ENCODE measurements at regions of chr17 and their contacts with region 1.

Region 1: GRCh38 chr17:7045909-7046724 is 2.2 kb upstream of the SLC16A11 start:
- DNase-seq: peak; percentile 35
- H3K4me3 ChIP-seq: no peak overlapping the region
- H3K27me3 ChIP-seq: peaks cover 16% of the 10 kb centered on the region
- CTCF ChIP-seq: peak; percentile 68

Region 2: DNA sequence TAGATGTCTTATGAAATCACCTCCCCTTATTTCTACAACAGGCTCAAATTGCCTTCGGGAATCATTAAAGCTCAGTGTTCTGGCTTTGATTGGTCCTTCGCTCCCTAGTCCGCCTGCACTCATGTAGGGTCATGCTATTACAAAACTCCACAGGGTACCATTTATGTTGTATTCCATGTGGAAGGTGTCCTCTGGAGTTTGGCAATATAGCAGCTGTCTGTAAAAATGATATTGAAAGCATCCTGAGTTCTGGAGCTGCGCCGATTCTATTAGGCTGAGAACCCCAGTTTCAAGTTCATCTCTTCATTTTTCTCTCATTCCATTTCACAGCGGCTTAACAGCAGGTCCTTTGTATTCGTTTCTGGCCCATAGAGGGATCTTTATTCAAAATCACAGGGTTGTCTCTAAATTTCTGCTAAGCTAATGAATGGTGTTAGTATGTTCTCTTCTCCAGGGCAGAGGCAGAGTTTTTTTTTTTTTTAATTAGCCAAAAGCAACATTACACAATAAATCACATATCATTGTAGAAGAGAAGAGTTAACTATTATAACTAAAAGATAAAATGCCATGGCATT is 142.7 kb before region 1 on chr17:
- CTCF ChIA-PET with region 1: no interaction called
- POLR2A ChIA-PET with region 1: no interaction called
- DNase-seq: no peak
- H3K4me3 ChIP-seq: no peak overlapping the region
- H3K27me3 ChIP-seq: no peaks in the 10 kb centered on the region; the same call in 1 of the 2 replicates
- CTCF ChIP-seq: no peak

Region 3: GRCh38 chr17:7136266-7136877 is 90.3 kb after region 1 on chr17:
- CTCF ChIA-PET with region 1: interaction called, 92 read pairs
- POLR2A ChIA-PET with region 1: no interaction called
- DNase-seq: peak; percentile 1
- H3K4me3 ChIP-seq: no peak overlapping the region
- H3K27me3 ChIP-seq: peaks cover 12% of the 10 kb centered on the region
- CTCF ChIP-seq: peak; percentile 91

Region 4: DNA sequence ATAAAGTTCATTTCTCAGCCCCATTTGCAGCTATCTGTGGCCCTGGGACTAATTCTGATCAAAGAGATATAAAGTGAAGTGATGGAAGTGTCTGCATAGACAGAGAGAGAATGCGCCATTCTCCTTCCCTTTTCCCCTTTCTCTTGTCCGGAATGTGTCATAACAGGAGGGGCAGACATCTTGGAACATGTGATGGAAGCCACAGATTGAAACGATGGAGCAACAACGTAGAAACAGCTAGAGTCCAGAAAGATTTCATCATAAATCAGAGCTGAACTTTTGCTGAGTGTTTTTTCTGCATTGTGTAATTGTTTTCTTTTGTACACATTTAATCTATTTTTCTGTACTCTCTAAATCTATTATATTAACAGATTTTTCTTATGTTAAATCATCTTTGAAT is 121.7 kb after region 1 on chr17:
- CTCF ChIA-PET with region 1: interaction called, 11 read pairs
- POLR2A ChIA-PET with region 1: no interaction called
- DNase-seq: no peak
- H3K4me3 ChIP-seq: no peak overlapping the region
- H3K27me3 ChIP-seq: no peaks in the 10 kb centered on the region
- CTCF ChIP-seq: no peak

Region 5: DNA sequence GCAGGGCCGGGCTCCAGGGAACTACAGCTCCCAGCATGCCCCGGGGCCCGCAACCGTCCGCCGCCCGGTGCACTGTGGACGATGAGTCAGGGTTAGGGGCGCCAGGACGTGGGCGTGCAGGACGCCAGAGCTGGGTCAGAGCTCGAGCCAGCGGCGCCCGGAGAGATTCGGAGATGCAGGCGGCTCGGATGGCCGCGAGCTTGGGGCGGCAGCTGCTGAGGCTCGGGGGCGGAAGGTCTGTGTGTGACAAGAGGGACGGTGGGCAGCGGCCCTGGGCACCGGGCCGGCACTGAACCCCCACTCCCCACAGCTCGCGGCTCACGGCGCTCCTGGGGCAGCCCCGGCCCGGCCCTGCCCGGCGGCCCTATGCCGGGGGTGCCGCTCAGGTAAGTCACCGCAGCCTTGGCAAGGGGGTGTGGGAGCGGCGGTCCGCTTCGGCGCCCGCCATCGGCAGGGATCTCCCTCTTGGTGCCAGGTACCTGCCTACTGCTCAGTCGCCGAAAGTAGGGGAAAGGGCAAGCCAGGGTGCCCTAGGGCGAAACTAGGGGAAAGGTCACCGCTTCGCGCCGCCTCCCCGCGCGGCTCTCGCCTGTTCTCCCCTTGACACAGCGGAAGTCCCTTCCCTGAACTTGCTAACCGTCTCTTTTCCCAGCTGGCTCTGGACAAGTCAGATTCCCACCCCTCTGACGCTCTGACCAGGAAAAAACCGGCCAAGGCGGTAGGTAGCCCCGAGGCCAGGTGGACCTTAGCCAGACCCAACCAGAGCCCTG is 173.9 kb after region 1 on chr17 and contains the starts of genes ACADVL and DLG4:
- CTCF ChIA-PET with region 1: interaction called, 13 read pairs
- POLR2A ChIA-PET with region 1: no interaction called
- DNase-seq: peak; percentile 37
- H3K4me3 ChIP-seq: peak within 1 kb of the TSS; percentile 84
- H3K27me3 ChIP-seq: no peaks in the 10 kb centered on the region
- CTCF ChIP-seq: no peak
- polyA plus RNA-seq, gene ACADVL: 335 and 517 TPM in 2 replicates
- polyA plus RNA-seq, gene DLG4: 13.3 and 20.4 TPM in 2 replicates

Region 6: DNA sequence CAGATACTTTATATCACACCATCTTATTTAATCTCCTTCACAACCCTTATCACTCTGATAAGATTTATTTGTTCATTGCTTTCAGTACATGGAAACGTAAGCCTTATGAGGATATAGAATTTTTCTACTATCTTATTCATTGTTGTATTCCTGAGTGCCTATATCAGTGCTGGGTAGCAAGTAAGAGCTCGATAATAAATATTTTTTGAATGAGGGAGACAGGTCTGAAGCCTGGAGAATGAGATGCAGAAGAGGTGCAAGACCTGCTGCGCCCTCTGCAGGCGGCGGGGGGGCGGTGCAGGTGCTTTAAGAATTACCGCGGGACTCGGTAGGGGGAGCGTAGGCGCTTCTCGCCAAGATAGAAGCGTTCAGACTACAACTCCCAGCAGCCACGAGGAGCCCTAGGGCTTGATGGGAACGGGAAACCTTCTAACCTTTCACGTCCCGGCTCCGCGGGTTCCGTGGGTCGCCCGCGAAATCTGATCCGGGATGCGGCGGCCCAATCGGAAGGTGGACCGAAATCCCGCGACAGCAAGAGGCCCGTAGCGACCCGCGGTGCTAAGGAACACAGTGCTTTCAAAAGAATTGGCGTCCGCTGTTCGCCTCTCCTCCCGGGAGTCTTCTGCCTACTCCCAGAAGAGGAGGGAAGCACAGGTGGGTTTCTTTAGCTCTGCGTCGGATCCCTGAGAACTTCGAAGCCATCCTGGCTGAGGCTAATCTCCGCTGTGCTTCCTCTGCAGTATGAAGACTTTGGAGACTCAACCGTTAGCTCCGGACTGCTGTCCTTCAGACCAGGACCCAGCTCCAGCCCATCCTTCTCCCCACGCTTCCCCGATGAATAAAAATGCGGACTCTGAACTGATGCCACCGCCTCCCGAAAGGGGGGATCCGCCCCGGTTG is 642.0 kb after region 1 on chr17 and contains the start of gene WRAP53:
- CTCF ChIA-PET with region 1: interaction called, 13 read pairs
- POLR2A ChIA-PET with region 1: no interaction called
- DNase-seq: peak; percentile 98
- H3K4me3 ChIP-seq: peak within 1 kb of the TSS; percentile 52
- H3K27me3 ChIP-seq: no peaks in the 10 kb centered on the region
- CTCF ChIP-seq: peak; percentile 99
- polyA plus RNA-seq, gene WRAP53: 5.8 and 7.9 TPM in 2 replicates